ENCODE measurements at regions of chr2 and their contacts with region 1.

Region 1: DNA sequence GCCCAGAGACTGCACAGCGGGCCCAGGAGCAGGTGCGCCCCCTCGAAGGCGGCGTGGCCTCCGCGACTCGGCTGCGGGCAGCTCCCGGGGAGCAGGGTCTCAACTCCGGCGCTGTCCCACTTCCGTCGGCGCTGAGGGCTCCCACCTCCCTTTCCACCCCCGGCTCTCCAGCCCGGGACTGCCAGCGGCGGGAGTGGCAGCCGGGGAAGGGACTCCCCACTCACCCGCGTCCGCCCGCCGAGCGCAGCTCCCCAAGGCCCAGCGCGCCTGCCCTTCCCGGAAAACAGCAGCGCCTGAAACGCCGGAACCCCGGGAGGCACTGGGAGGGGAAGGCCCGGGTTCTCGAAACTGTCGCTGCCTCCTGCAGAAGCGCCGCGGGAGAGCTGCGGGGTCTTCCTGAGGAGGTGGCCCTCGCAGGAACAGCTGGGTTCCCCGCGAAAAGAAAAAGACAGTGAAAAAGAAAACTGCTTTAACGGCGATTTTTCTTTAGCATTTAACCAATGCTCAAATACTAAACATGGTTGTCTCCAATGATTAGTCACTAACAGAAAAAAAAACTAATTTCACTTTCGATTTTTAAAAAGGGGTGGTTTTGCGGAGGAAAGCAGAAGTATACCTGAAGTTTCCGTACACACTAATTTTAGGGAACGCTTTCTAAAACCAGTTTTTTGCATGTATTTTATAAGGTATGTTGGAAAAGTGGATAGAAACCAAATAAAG is at the start of gene NMI:
- DNase-seq: peak; percentile 76
- H3K4me3 Mint-ChIP-seq: peak within 1 kb of the TSS; percentile 93
- H3K27ac Mint-ChIP-seq: peak within 1 kb of the TSS; percentile 93
- H3K4me1 Mint-ChIP-seq: peaks cover 45% of the 10 kb centered on the region
- H3K27me3 Mint-ChIP-seq: no peaks in the 10 kb centered on the region
- total RNA-seq, gene NMI: 70.5 to 77.0 TPM

Region 2: GRCh38 chr2:151230627-151231140 is 58.8 kb before region 1 on chr2:
- CTCF ChIA-PET with region 1: no interaction called
- POLR2A ChIA-PET with region 1: no interaction called
- DNase-seq: no peak
- H3K4me3 Mint-ChIP-seq: no peak overlapping the region
- H3K27ac Mint-ChIP-seq: no peak overlapping the region
- H3K4me1 Mint-ChIP-seq: no peaks in the 10 kb centered on the region
- H3K27me3 Mint-ChIP-seq: peaks cover 24% of the 10 kb centered on the region

Region 3: DNA sequence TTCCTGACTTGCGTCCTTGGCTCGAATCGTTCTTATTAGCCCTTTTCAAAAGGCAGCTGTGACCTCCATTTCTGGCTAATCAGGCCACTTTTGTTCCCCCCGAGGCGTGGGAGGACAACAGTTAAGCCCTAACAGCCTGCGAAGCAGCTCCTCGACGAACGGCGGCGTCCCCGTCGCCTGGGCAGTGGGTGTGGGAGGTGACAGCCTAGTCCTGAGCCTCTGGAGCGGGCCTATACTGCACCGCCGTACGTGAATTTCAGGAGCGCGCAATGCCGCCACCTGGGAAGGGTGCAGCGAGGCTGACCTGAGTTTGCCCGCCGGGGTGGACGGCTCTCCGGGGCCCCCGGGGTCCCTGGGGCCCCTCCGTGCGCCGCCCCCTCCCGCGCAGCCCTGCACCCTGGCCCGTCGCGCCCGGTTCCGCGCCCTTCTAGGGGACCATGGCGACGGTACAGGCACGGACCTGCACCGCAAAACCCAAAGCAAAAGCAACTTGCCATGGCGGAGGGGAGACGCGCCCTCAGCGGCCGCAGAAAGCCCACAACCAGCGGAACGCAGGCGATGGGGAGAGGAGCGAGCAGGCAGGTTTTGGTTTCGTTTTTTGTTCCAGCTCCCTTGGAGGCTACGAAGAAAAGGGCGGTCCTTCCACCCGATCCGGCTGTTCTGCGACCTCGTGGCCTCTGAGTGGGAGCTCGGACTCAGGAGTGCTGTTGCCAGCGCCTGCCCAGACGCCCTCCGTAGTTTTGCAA is 28.1 kb before region 1 on chr2 and contains the start of gene RBM43:
- CTCF ChIA-PET with region 1: interaction called, 18 read pairs
- POLR2A ChIA-PET with region 1: interaction called, 77 read pairs
- DNase-seq: peak; percentile 91
- H3K4me3 Mint-ChIP-seq: peak within 1 kb of the TSS; percentile 88
- H3K27ac Mint-ChIP-seq: peak within 1 kb of the TSS; percentile 98
- H3K4me1 Mint-ChIP-seq: peaks cover 28% of the 10 kb centered on the region
- H3K27me3 Mint-ChIP-seq: no peaks in the 10 kb centered on the region
- total RNA-seq, gene RBM43: 8.5 to 8.9 TPM

Region 4: DNA sequence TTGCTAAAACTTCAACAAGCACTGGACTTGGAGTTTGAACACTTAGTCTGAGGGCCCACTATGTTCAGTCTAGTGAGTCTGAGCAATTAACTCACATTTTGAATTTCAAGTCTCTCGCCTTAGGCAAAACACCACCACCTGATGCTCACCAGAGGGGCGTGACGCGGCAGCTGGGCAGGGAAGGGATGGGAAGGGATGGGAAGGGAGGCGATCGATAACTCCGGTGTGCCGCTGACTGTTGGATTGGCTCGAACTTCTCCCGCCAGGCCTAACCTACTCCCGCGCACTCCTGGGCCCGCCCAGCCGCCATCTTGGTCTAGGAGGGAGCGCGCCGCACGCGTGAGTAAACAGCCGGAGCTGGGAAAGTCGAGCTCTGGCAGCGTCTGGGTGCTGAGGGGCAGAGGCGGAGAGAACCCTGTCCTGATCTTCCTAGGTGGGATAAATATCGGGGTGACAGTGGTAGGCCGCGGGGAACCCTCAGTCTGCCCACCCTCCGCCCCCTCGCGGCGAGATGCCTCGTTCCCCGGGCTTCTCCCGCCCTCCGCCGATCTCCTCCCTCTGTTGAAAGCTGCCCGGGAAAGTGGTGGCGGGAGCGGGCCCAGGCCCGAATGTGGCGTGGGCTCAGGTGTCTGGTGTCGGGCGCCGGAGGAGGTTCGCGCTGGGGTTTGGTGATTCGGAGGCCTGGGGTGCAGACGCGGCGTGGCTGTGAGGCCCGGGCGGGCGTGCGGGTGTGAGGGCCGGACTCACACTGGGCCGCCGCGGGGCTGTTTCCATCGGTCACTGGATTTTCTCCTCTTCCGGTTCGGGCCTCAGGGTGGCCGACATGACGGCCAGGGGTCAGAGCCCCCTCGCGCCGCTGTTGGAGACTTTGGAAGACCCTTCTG is 120.3 kb after region 1 on chr2 and contains the start of gene RIF1:
- CTCF ChIA-PET with region 1: interaction called, 3 read pairs
- POLR2A ChIA-PET with region 1: interaction called, 27 read pairs
- DNase-seq: peak; percentile 79
- H3K4me3 Mint-ChIP-seq: peak within 1 kb of the TSS; percentile 96
- H3K27ac Mint-ChIP-seq: peak within 1 kb of the TSS; percentile 75
- H3K4me1 Mint-ChIP-seq: peaks cover 35% of the 10 kb centered on the region
- H3K27me3 Mint-ChIP-seq: no peaks in the 10 kb centered on the region
- total RNA-seq, gene RIF1: 50.4 to 52.4 TPM